Aorta (tissue), 5 donors: ENCODE measurements at regions of chr17 and their contacts with region 1.

Region 1: GRCh38 chr17:65407017-65407416 is 154.4 kb downstream of the AXIN2 start:
- DNase-seq: no peak
- ATAC-seq: no peak
- H3K4me3 ChIP-seq: no peak overlapping the region
- H3K27ac ChIP-seq: no peak overlapping the region
- H3K4me1 ChIP-seq: no peaks in the 10 kb centered on the region
- H3K27me3 ChIP-seq: no peaks in the 10 kb centered on the region

Region 2: GRCh38 chr17:65202844-65203571 is 204.0 kb before region 1 on chr17:
- intact Hi-C with region 1: no loop called
- DNase-seq: no peak
- ATAC-seq: no peak
- H3K4me3 ChIP-seq: no peak overlapping the region
- H3K27ac ChIP-seq: no peak overlapping the region
- H3K4me1 ChIP-seq: no peaks in the 10 kb centered on the region
- H3K27me3 ChIP-seq: no peaks in the 10 kb centered on the region

Region 3: GRCh38 chr17:66841328-66841727 is 1434.3 kb after region 1 on chr17:
- intact Hi-C with region 1: loop called in 1 of 2 experiments (anchors 10 kb)
- DNase-seq: no peak
- ATAC-seq: no peak
- H3K4me3 ChIP-seq: no peak overlapping the region
- H3K27ac ChIP-seq: no peak overlapping the region
- H3K4me1 ChIP-seq: no peaks in the 10 kb centered on the region
- H3K27me3 ChIP-seq: no peaks in the 10 kb centered on the region